Activated CD8-positive, alpha-beta T cell treated with anti-CD3 and anti-CD28 coated beads, Interleukin-2, amount 10 ng/mL, durations not matched to agents 7 days and 5 days (primary cell): ENCODE measurements at regions of chr18 and their contacts with region 1.

Region 1: GRCh38 chr18:58761970-58762780 is 90.9 kb downstream of the MALT1 start:
- DNase-seq: peak; percentile 18
- ATAC-seq: no peak
- H3K4me3 Mint-ChIP-seq: no peak overlapping the region
- H3K27ac Mint-ChIP-seq: peak overlapping the region; percentile 12
- H3K4me1 Mint-ChIP-seq: peaks cover 41% of the 10 kb centered on the region
- H3K27me3 Mint-ChIP-seq: peaks cover 29% of the 10 kb centered on the region

Region 2: GRCh38 chr18:58484989-58485981 is 276.9 kb before region 1 on chr18:
- CTCF ChIA-PET with region 1: interaction called, 14 read pairs
- POLR2A ChIA-PET with region 1: no interaction called
- DNase-seq: no peak
- ATAC-seq: no peak
- H3K4me3 Mint-ChIP-seq: no peak overlapping the region
- H3K27ac Mint-ChIP-seq: no peak overlapping the region
- H3K4me1 Mint-ChIP-seq: no peaks in the 10 kb centered on the region
- H3K27me3 Mint-ChIP-seq: peaks cover 23% of the 10 kb centered on the region

Region 3: GRCh38 chr18:58541789-58542425 is 220.3 kb before region 1 on chr18:
- CTCF ChIA-PET with region 1: interaction called, 61 read pairs
- POLR2A ChIA-PET with region 1: interaction called, 3 read pairs
- DNase-seq: peak; percentile 51
- ATAC-seq: peak; percentile 85
- H3K4me3 Mint-ChIP-seq: no peak overlapping the region
- H3K27ac Mint-ChIP-seq: peak overlapping the region; percentile 35
- H3K4me1 Mint-ChIP-seq: peaks cover 40% of the 10 kb centered on the region
- H3K27me3 Mint-ChIP-seq: peaks cover 3% of the 10 kb centered on the region

Region 4: GRCh38 chr18:58691256-58691655 is 70.9 kb before region 1 on chr18:
- CTCF ChIA-PET with region 1: interaction called, 13 read pairs
- POLR2A ChIA-PET with region 1: no interaction called
- DNase-seq: no peak
- ATAC-seq: no peak
- H3K4me3 Mint-ChIP-seq: no peak overlapping the region
- H3K27ac Mint-ChIP-seq: peak overlapping the region; percentile 18
- H3K4me1 Mint-ChIP-seq: peaks cover 88% of the 10 kb centered on the region
- H3K27me3 Mint-ChIP-seq: no peaks in the 10 kb centered on the region

Region 5: GRCh38 chr18:58723810-58724595 is 38.2 kb before region 1 on chr18:
- CTCF ChIA-PET with region 1: interaction called, 12 read pairs
- POLR2A ChIA-PET with region 1: no interaction called
- DNase-seq: no peak
- ATAC-seq: no peak
- H3K4me3 Mint-ChIP-seq: no peak overlapping the region
- H3K27ac Mint-ChIP-seq: no peak overlapping the region
- H3K4me1 Mint-ChIP-seq: peaks cover 4% of the 10 kb centered on the region
- H3K27me3 Mint-ChIP-seq: no peaks in the 10 kb centered on the region